Activated CD4-positive, alpha-beta memory T cell treated with anti-CD3 and anti-CD28 coated beads, Interleukin-2, amount 10 ng/mL, durations not matched to agents 7 days and 5 days (primary cell): ENCODE measurements at regions of chr15 and their contacts with region 1.

Region 1: GRCh38 chr15:55434989-55435825 is 26.9 kb downstream of the PIERCE2 start:
- DNase-seq: no peak
- H3K4me3 Mint-ChIP-seq: no peak overlapping the region
- H3K27ac Mint-ChIP-seq: no peak overlapping the region
- H3K4me1 Mint-ChIP-seq: peaks cover 6% of the 10 kb centered on the region
- H3K27me3 Mint-ChIP-seq: no peaks in the 10 kb centered on the region

Region 2: GRCh38 chr15:55221090-55222011 is 213.9 kb before region 1 on chr15:
- CTCF ChIA-PET with region 1: interaction called, 35 read pairs
- POLR2A ChIA-PET with region 1: no interaction called
- DNase-seq: peak; percentile 46
- H3K4me3 Mint-ChIP-seq: peak overlapping the region; percentile 43
- H3K27ac Mint-ChIP-seq: peak overlapping the region; percentile 94
- H3K4me1 Mint-ChIP-seq: peaks cover 84% of the 10 kb centered on the region
- H3K27me3 Mint-ChIP-seq: no peaks in the 10 kb centered on the region

Region 3: DNA sequence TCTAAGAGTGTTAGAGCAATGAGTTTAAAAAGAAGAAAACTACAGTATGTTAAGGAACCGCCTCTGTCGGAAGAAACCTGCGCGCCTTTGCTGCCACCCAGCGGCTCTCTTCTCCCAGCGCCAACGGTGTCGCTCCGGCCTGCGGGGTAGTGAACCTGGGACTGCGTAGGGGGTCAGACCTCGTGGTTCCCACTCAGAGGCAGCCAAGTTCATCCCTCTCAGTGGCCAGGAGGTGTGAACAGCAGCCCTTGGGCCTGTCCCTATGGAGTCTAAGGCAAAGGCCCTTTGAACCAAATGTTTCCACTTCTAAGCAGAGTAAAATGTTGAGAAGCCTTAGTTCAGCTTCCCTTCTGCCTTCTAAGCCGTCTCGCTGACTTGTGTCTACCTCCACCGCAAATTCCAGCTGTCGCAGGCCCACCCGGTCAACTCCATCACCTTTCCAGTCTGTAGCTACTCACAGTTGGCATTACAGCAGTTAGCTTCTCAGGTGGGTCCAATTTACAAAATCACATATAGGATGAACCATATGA is 144.6 kb before region 1 on chr15:
- CTCF ChIA-PET with region 1: interaction called, 13 read pairs
- POLR2A ChIA-PET with region 1: interaction called, 3 read pairs
- DNase-seq: peak; percentile 86
- H3K4me3 Mint-ChIP-seq: peak overlapping the region; percentile 94
- H3K27ac Mint-ChIP-seq: peak overlapping the region; percentile 86
- H3K4me1 Mint-ChIP-seq: peaks cover 37% of the 10 kb centered on the region
- H3K27me3 Mint-ChIP-seq: no peaks in the 10 kb centered on the region

Region 4: GRCh38 chr15:55318588-55319494 is 116.4 kb before region 1 on chr15 and contains the starts of genes PIGB and PIGBOS1:
- CTCF ChIA-PET with region 1: interaction called, 10 read pairs
- POLR2A ChIA-PET with region 1: no interaction called
- DNase-seq: peak; percentile 85
- H3K4me3 Mint-ChIP-seq: peak within 1 kb of the TSS; percentile 98
- H3K27ac Mint-ChIP-seq: peak within 1 kb of the TSS; percentile 95
- H3K4me1 Mint-ChIP-seq: peaks cover 56% of the 10 kb centered on the region
- H3K27me3 Mint-ChIP-seq: no peaks in the 10 kb centered on the region
- total RNA-seq, gene PIGB: 28.9 to 29.3 TPM
- total RNA-seq, gene PIGBOS1: 14.7 to 14.9 TPM

Region 5: DNA sequence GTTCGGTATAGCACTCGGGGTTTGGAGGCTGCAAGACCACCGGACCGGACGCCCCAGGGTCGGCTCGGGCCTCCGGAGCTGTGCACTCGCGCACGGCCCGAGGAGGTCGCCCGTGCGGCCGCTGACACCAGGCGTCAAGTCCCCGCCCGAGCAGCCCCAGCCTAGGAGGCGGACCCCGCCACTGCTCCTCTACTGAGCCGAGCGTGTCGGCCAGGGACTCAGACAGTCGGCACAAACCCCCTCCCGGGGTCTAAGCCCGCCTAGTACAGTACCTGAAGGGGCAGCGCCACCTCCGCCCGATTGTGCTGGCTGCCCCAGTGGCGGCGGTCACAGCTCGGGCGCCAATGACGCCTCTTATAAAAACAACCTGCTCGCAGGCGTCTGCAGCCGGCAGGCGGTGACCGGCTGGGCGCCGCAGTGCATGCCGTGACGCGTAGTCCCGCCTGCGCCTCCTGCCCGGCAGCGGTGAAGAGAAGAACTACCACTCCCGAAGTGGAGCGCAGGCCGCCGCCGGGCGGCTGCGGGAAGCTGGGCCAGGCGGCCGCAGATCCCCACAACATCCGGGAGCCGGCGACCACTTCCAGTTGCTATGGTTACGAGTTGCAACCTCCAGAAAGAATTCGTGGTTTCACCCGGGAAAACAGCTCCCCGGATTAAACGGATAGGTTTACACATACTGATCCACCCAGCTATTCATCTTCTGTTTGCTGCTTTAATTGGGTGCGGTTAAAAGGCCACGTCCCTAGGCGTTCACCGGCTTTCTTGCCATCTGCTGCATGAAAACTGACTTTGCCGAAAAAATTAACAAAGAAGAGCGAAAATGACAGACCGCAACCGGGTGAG is 27.0 kb before region 1 on chr15 and contains the starts of genes CCPG1 and PIERCE2:
- CTCF ChIA-PET with region 1: interaction called, 25 read pairs
- POLR2A ChIA-PET with region 1: interaction called, 4 read pairs
- DNase-seq: peak; percentile 92
- H3K4me3 Mint-ChIP-seq: peak within 1 kb of the TSS; percentile 91
- H3K27ac Mint-ChIP-seq: peak within 1 kb of the TSS; percentile 86
- H3K4me1 Mint-ChIP-seq: peaks cover 34% of the 10 kb centered on the region
- H3K27me3 Mint-ChIP-seq: no peaks in the 10 kb centered on the region
- total RNA-seq, gene CCPG1: 33.3 to 33.4 TPM
- total RNA-seq, gene PIERCE2: not detected

Region 6: DNA sequence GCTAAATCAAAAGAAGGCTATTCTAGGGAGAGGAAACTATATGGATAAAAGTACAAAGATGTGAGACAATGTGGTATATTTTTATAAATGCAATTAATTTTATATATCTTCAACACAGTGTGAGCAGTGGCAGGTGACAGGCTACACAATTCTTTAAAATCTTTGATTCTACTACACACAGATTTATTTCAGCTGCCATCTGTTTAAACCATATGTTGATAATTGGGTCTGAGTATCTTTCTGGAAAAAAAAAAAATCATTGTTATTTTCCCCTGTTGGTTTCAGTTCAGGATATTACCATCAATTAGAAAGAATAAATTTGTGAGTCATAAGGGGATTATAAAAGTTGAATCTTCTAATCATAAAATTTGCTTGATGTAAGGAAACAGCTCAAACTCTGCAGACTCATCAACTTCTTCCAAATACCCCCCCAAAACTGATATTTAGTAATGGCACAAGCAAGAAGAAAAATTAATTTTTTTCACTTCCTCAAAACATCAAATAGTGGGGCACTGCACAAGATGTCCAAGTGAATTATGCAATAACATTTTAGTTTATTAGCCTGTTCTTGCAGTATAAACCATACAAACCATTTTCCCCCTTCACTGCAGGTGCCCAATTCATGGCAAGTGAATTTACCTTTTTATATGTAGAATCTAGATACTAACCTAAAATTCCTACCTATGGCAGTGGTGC is 14.9 kb before region 1 on chr15:
- CTCF ChIA-PET with region 1: interaction called, 11 read pairs
- POLR2A ChIA-PET with region 1: no interaction called
- DNase-seq: no peak
- H3K4me3 Mint-ChIP-seq: no peak overlapping the region
- H3K27ac Mint-ChIP-seq: no peak overlapping the region
- H3K4me1 Mint-ChIP-seq: no peaks in the 10 kb centered on the region
- H3K27me3 Mint-ChIP-seq: no peaks in the 10 kb centered on the region

Region 7: DNA sequence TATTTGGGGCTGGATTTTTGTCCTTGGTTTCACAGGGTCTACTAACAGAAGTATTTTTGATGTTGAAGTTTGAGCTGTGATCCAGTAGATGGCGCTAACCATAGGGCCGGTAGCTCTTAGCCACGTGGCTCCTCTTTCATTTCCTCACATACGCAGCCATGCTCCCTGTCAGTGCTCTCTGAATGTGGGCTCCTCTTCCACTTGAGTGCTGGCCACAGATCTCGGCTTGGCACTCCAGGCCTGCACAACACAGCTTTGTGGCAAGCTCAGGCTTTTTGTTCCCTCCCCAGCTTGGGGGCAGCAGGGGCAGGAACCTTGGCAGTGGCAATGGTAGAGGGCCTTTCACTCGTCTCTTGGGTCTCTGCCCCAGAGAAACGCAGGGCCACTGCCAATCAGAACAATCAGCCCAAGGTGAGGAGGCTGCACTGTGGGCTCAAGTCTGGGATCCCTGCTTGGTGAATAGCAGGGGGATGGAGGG is 91.4 kb after region 1 on chr15:
- CTCF ChIA-PET with region 1: no interaction called
- POLR2A ChIA-PET with region 1: no interaction called
- DNase-seq: no peak
- H3K4me3 Mint-ChIP-seq: no peak overlapping the region
- H3K27ac Mint-ChIP-seq: no peak overlapping the region
- H3K4me1 Mint-ChIP-seq: peaks cover 17% of the 10 kb centered on the region
- H3K27me3 Mint-ChIP-seq: peaks cover 34% of the 10 kb centered on the region

Region 8: GRCh38 chr15:55799291-55800212 is 364.3 kb after region 1 on chr15:
- CTCF ChIA-PET with region 1: no interaction called
- POLR2A ChIA-PET with region 1: no interaction called
- DNase-seq: no peak
- H3K4me3 Mint-ChIP-seq: no peak overlapping the region
- H3K27ac Mint-ChIP-seq: no peak overlapping the region
- H3K4me1 Mint-ChIP-seq: no peaks in the 10 kb centered on the region
- H3K27me3 Mint-ChIP-seq: peaks cover 13% of the 10 kb centered on the region

Region 9: DNA sequence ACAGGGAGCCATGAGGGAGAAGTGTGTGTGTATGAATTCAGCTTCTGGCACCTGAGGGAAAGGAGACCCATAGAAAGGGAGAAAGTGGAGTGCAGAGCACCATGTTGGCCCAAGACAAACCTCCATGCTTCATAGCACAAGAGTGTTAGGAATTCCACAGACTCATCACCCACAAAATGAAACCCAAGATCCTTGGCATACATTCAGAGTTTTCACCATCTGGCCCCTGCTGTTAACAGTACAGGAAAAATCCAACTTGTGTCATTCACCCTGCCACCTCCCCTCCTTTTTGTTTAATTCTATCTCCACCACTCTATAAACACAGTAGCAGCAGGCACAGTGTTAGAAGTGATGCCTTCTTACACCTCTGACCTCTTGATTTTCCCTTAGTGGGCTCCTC is 1089.7 kb after region 1 on chr15:
- CTCF ChIA-PET with region 1: no interaction called
- POLR2A ChIA-PET with region 1: no interaction called
- DNase-seq: no peak
- H3K4me3 Mint-ChIP-seq: no peak overlapping the region
- H3K27ac Mint-ChIP-seq: no peak overlapping the region
- H3K4me1 Mint-ChIP-seq: no peaks in the 10 kb centered on the region
- H3K27me3 Mint-ChIP-seq: peaks cover 20% of the 10 kb centered on the region